ENCODE measurements at regions of chr2 and their contacts with region 1.

Region 1: DNA sequence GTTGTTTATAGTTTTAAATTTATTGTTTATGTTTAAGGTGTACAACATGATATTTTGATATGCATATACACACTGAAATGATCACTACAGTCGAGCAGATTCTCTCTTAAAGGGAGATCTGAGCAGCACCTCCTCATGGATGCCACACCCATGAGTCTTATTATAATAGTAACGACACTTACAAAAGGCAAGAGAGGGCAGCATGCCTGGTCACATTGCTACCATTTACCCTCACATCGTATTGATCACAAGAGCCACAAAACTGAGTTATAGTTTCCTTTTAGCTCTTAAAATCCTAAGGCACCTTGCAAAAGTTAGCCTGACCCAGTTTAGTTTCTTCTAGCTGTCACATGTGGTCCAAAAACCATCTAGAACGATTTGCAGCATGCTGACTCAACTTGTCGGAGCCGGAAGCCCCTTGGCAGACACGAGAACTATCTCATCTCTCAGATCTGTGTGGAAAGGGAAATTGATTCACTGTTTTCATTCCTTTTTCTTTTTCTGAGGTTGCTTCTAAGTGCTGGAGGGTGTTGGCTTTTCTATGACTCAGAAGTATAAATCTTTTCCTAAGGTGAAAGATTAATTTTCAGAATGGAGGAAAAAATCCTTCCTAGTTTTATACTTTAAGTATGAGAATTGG is 85.3 kb downstream of the CDC42EP3 start:
- DNase-seq: peak; percentile 25 to 62
- ATAC-seq: no peak
- H3K4me3 ChIP-seq: no peak overlapping the region
- H3K27ac ChIP-seq: peak overlapping the region; percentile 76 to 87 (median 85)
- H3K4me1 ChIP-seq: peaks cover 64 to 65% of the 10 kb centered on the region in 2 donors
- H3K27me3 ChIP-seq: no peaks in the 10 kb centered on the region
- CTCF ChIP-seq: no peak
- POLR2A ChIP-seq: no peak

Region 2: GRCh38 chr2:36871068-36871707 is 714.9 kb before region 1 on chr2:
- in situ Hi-C with region 1: no loop called
- intact Hi-C with region 1: no loop called
- DNase-seq: no peak
- ATAC-seq: no peak
- H3K4me3 ChIP-seq: no peak overlapping the region
- H3K27ac ChIP-seq: no peak overlapping the region
- H3K4me1 ChIP-seq: no peaks in the 10 kb centered on the region
- H3K27me3 ChIP-seq: no peaks in the 10 kb centered on the region
- CTCF ChIP-seq: no peak
- POLR2A ChIP-seq: no peak

Region 3: DNA sequence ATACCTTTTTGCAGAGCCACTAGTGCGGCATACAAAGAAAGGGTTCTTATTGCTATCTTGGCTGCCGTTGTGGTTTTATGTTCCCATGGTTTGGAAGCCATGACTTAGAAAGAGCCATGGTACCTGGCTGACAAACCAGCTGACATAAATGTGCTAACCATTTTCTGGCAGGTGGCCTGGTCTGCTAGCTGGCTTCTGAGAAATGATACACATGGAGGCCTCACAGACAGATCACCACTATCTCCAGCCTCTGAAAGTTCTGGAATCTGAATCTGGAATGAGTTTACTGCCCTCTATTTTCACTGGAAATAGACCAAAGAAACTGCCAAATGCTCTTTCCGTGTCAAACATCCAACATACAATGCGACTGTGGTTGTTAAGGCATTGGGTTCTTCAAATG is 117.9 kb before region 1 on chr2:
- in situ Hi-C with region 1: no loop called
- intact Hi-C with region 1: loop called (anchors 2 kb)
- DNase-seq: peak; percentile 81 to 82
- ATAC-seq: peak; percentile 99 to 100
- H3K4me3 ChIP-seq: no peak overlapping the region
- H3K27ac ChIP-seq: peak overlapping the region; percentile 50 to 78 (median 58)
- H3K4me1 ChIP-seq: peaks cover 11 to 14% of the 10 kb centered on the region in 2 donors
- H3K27me3 ChIP-seq: no peaks in the 10 kb centered on the region
- CTCF ChIP-seq: no peak
- POLR2A ChIP-seq: no peak

Region 4: DNA sequence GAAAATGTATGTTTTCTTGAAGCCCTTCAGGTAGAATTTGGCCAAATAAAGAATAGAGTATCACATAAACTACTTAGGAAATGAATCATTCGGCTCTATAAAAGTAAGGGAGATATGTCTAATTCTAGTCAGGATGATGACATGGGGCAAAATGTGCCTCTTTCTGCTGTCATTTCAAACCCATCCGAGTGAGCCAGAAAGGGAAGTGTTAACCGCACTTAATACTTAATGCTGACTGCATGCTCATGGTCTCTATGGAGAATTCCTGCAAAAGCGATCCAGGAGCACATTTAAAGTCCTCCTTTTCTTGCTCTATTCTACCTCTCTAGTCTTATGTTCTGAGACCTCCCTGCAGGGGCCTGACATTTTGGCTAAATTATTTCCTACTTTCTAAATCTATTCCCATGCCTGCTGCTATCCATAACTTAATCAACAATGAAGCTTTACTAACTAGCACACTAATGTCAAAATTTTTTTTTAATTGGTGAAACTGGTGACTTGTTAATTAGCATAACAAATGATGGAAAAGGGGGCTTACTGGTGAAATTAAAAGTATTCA is 42.0 kb before region 1 on chr2:
- in situ Hi-C with region 1: no loop called
- intact Hi-C with region 1: no loop called
- DNase-seq: no peak
- ATAC-seq: no peak
- H3K4me3 ChIP-seq: no peak overlapping the region
- H3K27ac ChIP-seq: no peak overlapping the region
- H3K4me1 ChIP-seq: no peaks in the 10 kb centered on the region
- H3K27me3 ChIP-seq: no peaks in the 10 kb centered on the region
- CTCF ChIP-seq: no peak
- POLR2A ChIP-seq: no peak

Region 5: DNA sequence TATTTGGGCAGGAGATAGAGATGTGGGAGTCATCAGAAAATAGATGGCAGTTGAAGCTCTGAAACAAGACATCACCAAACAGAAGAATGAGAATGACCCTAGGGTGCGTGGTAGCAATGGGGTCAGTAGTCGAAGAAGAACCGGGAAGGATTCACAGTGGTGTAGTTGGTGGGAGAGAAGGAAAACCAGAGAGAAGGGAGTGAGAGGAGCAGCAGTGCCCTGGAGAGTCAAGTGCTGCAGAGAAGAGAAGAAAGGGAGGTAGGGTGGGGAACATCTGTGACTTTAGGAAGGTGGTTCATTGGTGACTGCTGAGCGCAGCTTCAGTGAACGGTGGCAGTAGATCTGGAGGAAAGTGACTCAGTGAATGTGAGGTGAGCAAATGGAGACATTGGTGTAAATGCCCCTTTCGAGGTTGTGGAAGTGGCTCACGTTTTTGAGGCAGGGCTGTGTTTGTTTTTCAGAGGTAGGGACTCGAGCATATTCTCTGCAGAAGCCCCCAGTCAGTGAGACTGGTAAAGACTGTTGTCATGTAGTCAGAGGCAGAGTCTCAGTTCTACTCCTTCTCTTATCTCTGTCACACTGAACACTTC is 48.9 kb after region 1 on chr2:
- in situ Hi-C with region 1: no loop called
- intact Hi-C with region 1: loop called (anchors 5 kb)
- DNase-seq: no peak
- ATAC-seq: no peak
- H3K4me3 ChIP-seq: no peak overlapping the region
- H3K27ac ChIP-seq: no peak overlapping the region
- H3K4me1 ChIP-seq: peaks cover 10 to 19% of the 10 kb centered on the region in 2 donors
- H3K27me3 ChIP-seq: no peaks in the 10 kb centered on the region
- CTCF ChIP-seq: no peak
- POLR2A ChIP-seq: no peak

Region 6: GRCh38 chr2:37653805-37654378 is 67.8 kb after region 1 on chr2:
- in situ Hi-C with region 1: no loop called
- intact Hi-C with region 1: loop called (anchors 5 kb)
- DNase-seq: peak; percentile 80 to 95
- ATAC-seq: peak; percentile 83 to 85
- H3K4me3 ChIP-seq: peak overlapping the region; percentile 16 to 46 (median 27)
- H3K27ac ChIP-seq: peak overlapping the region; percentile 85 to 88 (median 87)
- H3K4me1 ChIP-seq: peaks cover 93 to 94% of the 10 kb centered on the region in 2 donors
- H3K27me3 ChIP-seq: no peaks in the 10 kb centered on the region
- CTCF ChIP-seq: no peak
- POLR2A ChIP-seq: peak; percentile 4 to 46